ENCODE measurements at regions of chr17 and their contacts with region 1.

Region 1: DNA sequence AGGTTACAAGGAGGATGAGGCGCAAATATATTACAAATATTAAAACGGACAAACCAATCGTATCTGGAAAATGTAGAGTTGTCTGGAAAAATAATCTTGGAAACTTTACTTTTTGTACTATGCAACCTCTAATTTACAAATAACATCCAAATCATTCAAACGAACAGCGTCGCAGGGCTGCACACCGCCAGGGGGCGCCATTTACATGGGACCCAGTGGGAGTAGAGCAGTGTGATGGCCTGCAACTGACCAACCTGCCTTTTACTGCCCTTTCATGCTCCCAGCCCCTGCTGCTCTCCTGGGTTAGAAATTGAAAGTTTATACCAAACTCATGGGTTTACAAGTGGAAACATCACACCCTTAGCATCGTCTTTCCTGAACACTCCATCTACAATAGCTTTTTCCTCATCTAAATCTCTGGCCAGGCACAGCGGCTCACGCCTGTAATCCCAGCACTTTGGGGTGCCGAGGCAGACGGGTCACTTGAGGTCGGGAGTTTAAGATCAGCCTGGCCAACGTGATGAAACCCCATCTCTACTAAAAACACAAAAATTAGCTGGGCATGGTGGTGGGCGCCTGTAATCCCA is 10.0 kb downstream of the PITPNC1 start:
- DNase-seq: peak in 6 of 7 donors; percentile 26 to 69 (median 48)
- H3K4me3 ChIP-seq: no peak overlapping the region
- H3K27ac ChIP-seq: no peak overlapping the region
- H3K4me1 ChIP-seq: peaks cover 0 to 8% of the 10 kb centered on the region in 2 donors
- H3K27me3 ChIP-seq: no peaks in the 10 kb centered on the region
- CTCF ChIP-seq: peak; percentile 45 to 64 (median 55)
- POLR2A ChIP-seq: no peak

Region 2: GRCh38 chr17:67475236-67475937 is 88.3 kb after region 1 on chr17:
- intact Hi-C with region 1: loop called in 1 of 2 experiments (anchors 5 kb)
- DNase-seq: peak; percentile 74 to 94 (median 86)
- H3K4me3 ChIP-seq: no peak overlapping the region
- H3K27ac ChIP-seq: peak overlapping the region in 2 of 5 donors; percentile 33 to 72
- H3K4me1 ChIP-seq: peaks cover 0 to 13% of the 10 kb centered on the region in 2 donors
- H3K27me3 ChIP-seq: no peaks in the 10 kb centered on the region
- CTCF ChIP-seq: peak; percentile 80 to 96 (median 92)
- POLR2A ChIP-seq: no peak

Region 3: GRCh38 chr17:67629971-67630320 is 242.9 kb after region 1 on chr17:
- intact Hi-C with region 1: loop called in 1 of 2 experiments (anchors 10 kb)
- DNase-seq: peak in 2 of 7 donors; percentile 37 to 38
- H3K4me3 ChIP-seq: no peak overlapping the region
- H3K27ac ChIP-seq: peak overlapping the region in 2 of 5 donors; percentile 15 to 27
- H3K4me1 ChIP-seq: peaks cover 0 to 8% of the 10 kb centered on the region in 2 donors
- H3K27me3 ChIP-seq: no peaks in the 10 kb centered on the region
- CTCF ChIP-seq: peak; percentile 22 to 61 (median 50)
- POLR2A ChIP-seq: no peak

Measured in adrenal gland (tissue), 19 donors.